Activated CD4-positive, alpha-beta T cell treated with anti-CD3 and anti-CD28 coated beads, Interleukin-2, amount 10 ng/mL, durations not matched to agents 24 days and 14 days (primary cell): ENCODE measurements at regions of chr13 and their contacts with region 1.

Region 1: GRCh38 chr13:95191821-95192563 is 109.3 kb downstream of the ABCC4 start:
- DNase-seq: peak; percentile 88
- H3K4me3 Mint-ChIP-seq: no peak overlapping the region
- H3K27ac Mint-ChIP-seq: no peak overlapping the region
- H3K4me1 Mint-ChIP-seq: peaks cover 8% of the 10 kb centered on the region
- H3K27me3 Mint-ChIP-seq: no peaks in the 10 kb centered on the region

Region 2: DNA sequence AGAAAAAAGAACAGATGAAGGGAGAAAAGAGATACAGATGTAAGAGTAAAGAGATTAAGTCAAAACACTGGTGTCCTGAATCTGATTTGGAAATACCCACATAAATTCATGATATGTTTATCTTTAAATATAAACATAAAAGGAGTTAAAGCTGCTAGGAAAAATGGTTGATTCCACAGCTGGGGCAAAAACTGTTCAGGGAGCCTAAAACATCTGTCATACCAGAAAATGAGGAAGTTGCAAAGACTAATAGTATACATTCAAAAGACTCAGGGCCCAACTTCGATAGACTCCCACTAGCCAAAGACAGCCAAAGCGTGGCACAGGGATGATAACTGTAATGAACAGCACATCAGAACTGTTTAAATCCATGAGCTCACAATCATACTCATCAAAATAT is 47.3 kb after region 1 on chr13:
- intact Hi-C with region 1: no loop called
- DNase-seq: no peak
- H3K4me3 Mint-ChIP-seq: no peak overlapping the region
- H3K27ac Mint-ChIP-seq: no peak overlapping the region
- H3K4me1 Mint-ChIP-seq: peaks cover 2% of the 10 kb centered on the region
- H3K27me3 Mint-ChIP-seq: no peaks in the 10 kb centered on the region

Region 3: GRCh38 chr13:95301183-95301967 is 109.4 kb after region 1 on chr13 and contains the start of gene ABCC4:
- intact Hi-C with region 1: loop called (anchors 2 kb)
- DNase-seq: peak; percentile 90
- H3K4me3 Mint-ChIP-seq: peak within 1 kb of the TSS; percentile 91
- H3K27ac Mint-ChIP-seq: peak within 1 kb of the TSS; percentile 85
- H3K4me1 Mint-ChIP-seq: peaks cover 28% of the 10 kb centered on the region
- H3K27me3 Mint-ChIP-seq: peaks cover 12% of the 10 kb centered on the region
- total RNA-seq, gene ABCC4: 19.6 and 20.9 TPM in 2 replicates

Region 4: DNA sequence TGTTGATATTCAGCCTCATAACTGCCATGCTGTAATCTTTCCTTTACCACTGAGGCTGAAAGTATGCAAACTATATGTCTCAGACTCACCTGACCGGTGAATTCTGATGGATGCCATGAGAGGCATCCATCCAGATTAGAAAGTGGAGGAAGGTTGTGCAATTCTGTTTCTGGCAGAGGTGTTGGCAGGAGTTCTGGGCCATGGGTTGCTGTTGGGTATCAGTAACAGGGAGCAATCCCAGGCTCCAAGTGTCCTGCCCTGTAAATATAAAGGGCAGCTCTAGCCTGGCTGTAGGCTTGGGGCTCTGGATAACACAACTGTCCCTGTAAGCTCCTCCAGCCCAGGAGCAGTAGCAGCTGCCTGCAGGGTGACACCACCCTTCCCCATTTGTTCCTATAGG is 186.6 kb after region 1 on chr13:
- intact Hi-C with region 1: loop called (anchors 1 kb)
- DNase-seq: no peak
- H3K4me3 Mint-ChIP-seq: no peak overlapping the region
- H3K27ac Mint-ChIP-seq: no peak overlapping the region
- H3K4me1 Mint-ChIP-seq: no peaks in the 10 kb centered on the region
- H3K27me3 Mint-ChIP-seq: peaks cover 10% of the 10 kb centered on the region

Region 5: DNA sequence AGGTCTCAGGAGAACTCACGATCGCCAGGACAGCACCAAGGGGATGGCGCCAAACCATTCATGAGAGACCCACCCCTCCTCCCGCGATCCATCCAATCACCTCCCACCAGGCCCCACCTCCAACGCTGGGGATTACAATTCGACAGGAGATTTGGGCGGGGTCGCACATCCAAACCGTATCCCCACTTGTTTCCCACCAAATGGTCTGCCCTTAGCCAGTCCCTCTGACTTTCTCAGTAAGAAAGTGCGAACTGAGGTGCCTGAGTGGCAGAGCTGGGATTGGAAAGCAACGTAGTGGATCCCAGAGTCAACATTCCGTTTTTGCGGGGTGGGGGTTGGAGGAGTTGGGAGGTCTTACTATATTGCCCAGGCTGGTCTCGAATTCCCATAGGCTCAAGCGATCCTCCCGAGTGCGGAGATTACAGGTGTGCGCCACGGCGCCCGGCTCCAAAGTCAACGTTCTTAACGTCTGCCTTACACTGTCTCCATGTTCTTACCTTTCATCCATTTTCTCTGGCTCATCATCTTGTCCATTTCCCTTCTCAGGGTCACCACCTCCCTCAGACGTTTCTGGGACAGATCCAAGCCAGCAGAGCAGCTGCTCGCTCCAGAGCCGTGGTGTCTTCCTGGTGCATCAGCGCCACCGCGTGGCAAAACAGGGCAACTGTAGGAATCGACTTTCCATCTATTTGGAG is 212.0 kb after region 1 on chr13:
- intact Hi-C with region 1: loop called (anchors 1 kb)
- DNase-seq: peak; percentile 92
- H3K4me3 Mint-ChIP-seq: peak overlapping the region; percentile 80
- H3K27ac Mint-ChIP-seq: no peak overlapping the region
- H3K4me1 Mint-ChIP-seq: peaks cover 7% of the 10 kb centered on the region
- H3K27me3 Mint-ChIP-seq: peaks cover 7% of the 10 kb centered on the region

Region 6: DNA sequence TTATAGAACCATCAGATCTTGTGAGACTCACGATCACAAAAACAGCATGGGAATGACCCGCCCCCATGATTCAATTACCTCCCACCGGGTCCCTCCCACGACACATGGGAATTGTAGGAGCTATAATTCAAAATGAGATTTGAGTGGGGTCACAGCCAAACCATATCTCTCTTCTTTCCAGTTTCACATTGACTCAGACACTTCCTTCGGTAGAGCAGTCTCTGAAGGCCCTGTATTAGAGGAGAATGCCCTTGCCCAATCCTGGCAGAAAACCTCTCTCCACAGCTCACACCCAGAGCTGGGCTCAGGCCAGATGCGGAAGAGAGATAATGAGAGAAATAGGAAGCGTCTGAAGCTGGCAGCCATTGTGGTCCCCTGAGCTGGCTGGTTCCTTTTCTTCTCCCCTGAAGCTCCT is 288.1 kb after region 1 on chr13:
- intact Hi-C with region 1: loop called (anchors 1 kb)
- DNase-seq: peak; percentile 58
- H3K4me3 Mint-ChIP-seq: peak overlapping the region; percentile 29
- H3K27ac Mint-ChIP-seq: peak overlapping the region; percentile 58
- H3K4me1 Mint-ChIP-seq: peaks cover 13% of the 10 kb centered on the region
- H3K27me3 Mint-ChIP-seq: peaks cover 7% of the 10 kb centered on the region